Panc1 (cell line): ENCODE measurements at regions of chr19 and their contacts with region 1.

Region 1: DNA sequence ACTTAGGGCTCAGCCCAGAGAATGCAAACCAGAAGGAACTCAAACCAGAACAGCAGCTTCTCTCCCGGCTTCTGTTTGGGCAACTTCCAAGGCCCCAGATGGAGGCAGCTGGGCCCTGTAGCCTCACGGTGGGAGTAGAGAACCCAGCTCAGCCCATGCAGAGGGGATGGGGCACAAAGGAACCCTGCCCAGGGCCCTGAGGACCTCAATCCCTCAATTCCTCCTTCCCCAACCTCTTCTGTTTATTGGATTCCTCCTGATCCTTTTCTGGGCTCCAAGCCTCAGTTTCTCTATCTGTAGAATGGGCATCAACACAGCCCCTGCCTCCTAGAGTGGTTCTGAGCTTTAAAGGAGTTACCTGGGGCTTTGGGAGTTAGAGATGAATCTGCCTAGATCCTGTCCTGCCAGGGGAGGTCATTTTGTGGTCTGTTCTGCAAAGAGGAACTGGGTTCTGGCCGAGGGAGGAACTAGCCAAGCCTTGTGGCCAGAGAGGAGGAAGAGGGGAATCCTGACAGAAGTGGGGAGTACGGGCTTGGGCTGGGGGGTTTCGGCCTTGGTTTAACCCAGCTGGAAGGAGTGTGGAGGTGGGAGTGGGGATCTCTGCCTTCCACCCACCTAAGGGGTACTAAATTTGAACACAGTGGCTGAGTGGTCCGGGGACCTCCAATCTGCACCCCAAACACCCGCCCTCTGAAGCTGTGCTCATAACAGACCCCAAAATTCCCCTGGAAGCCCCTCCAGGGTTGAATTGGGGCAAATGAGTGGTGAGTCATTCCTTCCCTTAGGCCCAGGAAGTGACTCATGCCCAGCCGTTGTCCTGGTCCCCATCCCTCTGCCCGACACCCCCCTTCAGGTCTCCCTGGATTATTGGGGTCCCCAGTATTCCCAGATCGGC is 2.7 kb downstream of the ADGRE5 start:
- DNase-seq: no peak
- ATAC-seq: no peak; the same call in 1 of the 2 replicates
- H3K4me3 ChIP-seq: peak overlapping the region; percentile 71 to 90
- H3K27ac ChIP-seq: peak overlapping the region; percentile 95
- H3K4me1 ChIP-seq: peaks cover 14% of the 10 kb centered on the region
- H3K27me3 ChIP-seq: no peaks in the 10 kb centered on the region
- CTCF ChIP-seq: no peak

Region 2: DNA sequence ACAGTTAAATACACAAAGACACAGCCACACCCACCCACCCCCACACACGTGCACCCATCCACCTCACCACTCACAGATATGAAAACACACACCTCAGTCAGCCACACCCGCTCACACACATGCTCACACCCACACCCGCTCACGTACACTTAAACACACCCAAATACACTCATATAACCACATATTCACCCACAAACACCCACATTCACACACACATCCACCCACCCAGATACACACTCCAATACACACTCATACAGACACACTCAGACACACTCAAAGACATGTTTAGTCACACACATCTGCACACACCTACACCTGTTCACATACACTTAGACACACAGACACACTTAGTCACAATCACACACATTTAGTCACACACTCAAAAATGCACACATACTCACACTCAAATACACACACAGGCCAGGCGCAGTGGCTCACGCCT is 208.5 kb before region 1 on chr19:
- CTCF ChIA-PET with region 1: interaction called, 15 read pairs
- POLR2A ChIA-PET with region 1: no interaction called
- in situ Hi-C with region 1: no loop called
- intact Hi-C with region 1: no loop called
- DNase-seq: no peak
- ATAC-seq: no peak
- H3K4me3 ChIP-seq: no peak overlapping the region
- H3K27ac ChIP-seq: no peak overlapping the region
- H3K4me1 ChIP-seq: no peaks in the 10 kb centered on the region
- H3K27me3 ChIP-seq: no peaks in the 10 kb centered on the region
- CTCF ChIP-seq: no peak

Region 3: GRCh38 chr19:14407605-14408484 is 23.9 kb after region 1 on chr19:
- CTCF ChIA-PET with region 1: interaction called, 12 read pairs
- POLR2A ChIA-PET with region 1: no interaction called
- in situ Hi-C with region 1: no loop called
- intact Hi-C with region 1: no loop called
- DNase-seq: no peak
- ATAC-seq: peak; percentile 36
- H3K4me3 ChIP-seq: no peak overlapping the region
- H3K27ac ChIP-seq: peak overlapping the region; percentile 59; the same call in 1 of the 2 replicates
- H3K4me1 ChIP-seq: peaks cover 13% of the 10 kb centered on the region
- H3K27me3 ChIP-seq: no peaks in the 10 kb centered on the region
- CTCF ChIP-seq: no peak